ENCODE measurements at regions of chr7 and their contacts with region 1.

Region 1: GRCh38 chr7:30814700-30815387 is 43.6 kb downstream of the MINDY4 start:
- DNase-seq: peak; percentile 84 to 86
- ATAC-seq: peak; percentile 72
- H3K4me3 ChIP-seq: no peak overlapping the region
- H3K27ac ChIP-seq: peak overlapping the region; percentile 89 to 93
- H3K4me1 ChIP-seq: peaks cover 14 to 16% of the 10 kb centered on the region in 2 donors
- H3K27me3 ChIP-seq: no peaks in the 10 kb centered on the region

Region 2: DNA sequence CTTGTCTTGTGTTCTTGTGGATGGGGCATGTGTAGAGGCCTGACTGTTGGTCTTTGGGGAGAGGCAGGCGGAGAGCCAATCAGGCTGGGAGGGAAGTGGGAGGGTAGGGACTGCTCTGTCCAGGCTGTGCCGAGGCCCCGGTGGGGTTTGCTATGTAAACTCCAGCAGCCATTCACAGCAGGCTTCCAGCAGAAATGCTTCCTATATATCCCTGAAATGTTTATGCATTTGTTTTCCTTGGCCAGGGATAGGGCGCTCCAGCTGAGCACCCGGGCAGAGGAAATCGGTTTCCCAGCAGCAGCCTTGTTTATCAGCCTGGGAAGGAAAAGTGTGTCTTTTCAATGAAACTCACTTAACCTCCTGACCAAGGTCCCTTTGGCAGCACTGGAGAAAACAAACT is 78.5 kb after region 1 on chr7:
- intact Hi-C with region 1: loop called in 1 of 2 experiments (anchors 5 kb)
- DNase-seq: no peak
- ATAC-seq: peak; percentile 64
- H3K4me3 ChIP-seq: no peak overlapping the region
- H3K27ac ChIP-seq: peak overlapping the region in 1 of 2 donors; percentile 6
- H3K4me1 ChIP-seq: peaks cover 0 to 4% of the 10 kb centered on the region in 2 donors
- H3K27me3 ChIP-seq: no peaks in the 10 kb centered on the region

Region 3: DNA sequence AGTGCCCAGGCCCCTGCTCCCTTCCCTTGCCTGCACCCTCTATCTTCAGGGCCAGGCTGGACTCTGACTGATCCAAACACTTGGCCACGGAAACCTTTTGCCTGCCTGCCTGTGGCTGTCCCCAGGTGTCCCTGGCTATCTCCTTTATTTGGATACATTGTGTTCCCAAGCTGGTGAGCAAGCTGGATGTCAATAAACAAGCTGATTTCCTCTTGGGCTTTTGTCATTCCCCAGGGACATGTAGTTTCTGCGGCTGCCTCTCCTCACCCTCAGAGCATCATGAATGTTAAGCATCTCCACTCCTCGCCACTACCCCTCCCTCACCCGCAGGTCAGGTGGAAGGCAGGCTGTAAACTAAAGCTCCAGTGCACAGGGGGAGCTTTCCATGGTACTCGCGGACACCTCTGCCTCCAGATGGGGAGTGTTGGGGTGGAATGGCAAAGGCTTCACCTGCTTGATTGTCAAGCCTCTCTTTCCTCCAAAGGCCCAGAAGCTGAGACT is 155.8 kb after region 1 on chr7:
- intact Hi-C with region 1: no loop called
- DNase-seq: no peak
- ATAC-seq: no peak
- H3K4me3 ChIP-seq: no peak overlapping the region
- H3K27ac ChIP-seq: no peak overlapping the region
- H3K4me1 ChIP-seq: no peaks in the 10 kb centered on the region
- H3K27me3 ChIP-seq: no peaks in the 10 kb centered on the region

Measured in aorta (tissue), 5 donors.